ENCODE measurements at regions of chr12 and their contacts with region 1.

Region 1: DNA sequence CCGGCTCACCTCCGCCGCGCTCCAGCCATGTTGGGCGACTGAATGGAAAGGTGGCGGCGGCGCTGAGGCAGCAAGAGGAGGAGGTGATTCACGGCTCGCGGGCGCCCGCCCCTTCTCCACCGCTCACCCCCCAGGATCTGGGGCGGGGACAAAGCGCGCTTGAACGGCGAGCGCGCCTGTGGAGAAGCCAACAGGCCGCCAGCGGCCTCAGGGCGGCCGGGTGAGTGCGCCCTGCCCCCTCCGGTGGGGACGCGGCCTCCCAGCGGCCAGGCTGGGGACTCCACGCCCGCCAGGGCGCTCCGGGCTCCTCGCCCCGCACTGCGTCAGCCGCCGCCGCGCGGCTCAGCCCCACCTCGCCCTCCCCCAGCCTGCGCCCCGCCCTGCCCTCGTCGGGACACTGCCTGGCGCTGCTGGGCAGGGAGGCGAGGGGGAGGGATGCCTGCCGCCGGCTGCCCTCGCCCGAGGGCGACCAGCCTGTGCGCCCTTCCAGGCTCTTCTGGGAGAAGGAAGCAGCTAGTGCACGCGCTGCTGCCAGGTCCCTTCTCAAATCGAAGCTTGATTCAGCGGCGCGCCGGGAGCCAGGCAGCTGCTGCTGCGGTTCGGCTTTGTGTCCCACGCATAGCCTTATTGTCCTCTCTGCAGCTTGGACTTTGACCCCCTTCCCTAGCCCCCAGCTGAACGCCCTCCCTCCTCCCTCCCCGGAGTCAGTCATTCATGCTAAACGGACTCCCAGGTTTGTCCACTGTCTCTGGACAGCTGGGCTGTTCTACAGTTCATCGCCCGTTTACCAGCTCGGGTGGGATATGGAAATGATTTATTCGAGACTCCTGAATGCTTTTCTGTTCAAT is at the start of gene KIF21A:
- DNase-seq: peak; percentile 66
- ATAC-seq: peak; percentile 93
- H3K4me3 ChIP-seq: peak within 1 kb of the TSS; percentile 99
- H3K27ac ChIP-seq: peak within 1 kb of the TSS; percentile 51
- H3K4me1 ChIP-seq: no peaks in the 10 kb centered on the region; the same call in 1 of the 2 replicates
- H3K27me3 ChIP-seq: no peaks in the 10 kb centered on the region
- CTCF ChIP-seq: peak; percentile 48 to 68 (median 57); a peak in 5 of 6 replicates
- EP300 ChIP-seq: peak in 1 of 2 experiments; percentile 8; a peak in 1 of 4 replicates
- POLR2A ChIP-seq: peak; percentile 99
- RAD21 ChIP-seq: peak; percentile 50; the same call in 1 of the 2 replicates
- polyA plus RNA-seq, gene KIF21A: 21.3 to 24.6 TPM

Region 2: GRCh38 chr12:38689704-38690103 is 753.6 kb before region 1 on chr12:
- CTCF ChIA-PET with region 1: no interaction called
- POLR2A ChIA-PET with region 1: no interaction called
- RAD21 ChIA-PET with region 1: no interaction called
- SMC1A ChIA-PET with region 1: no interaction called
- in situ Hi-C with region 1: loop called (anchors 25 kb)
- intact Hi-C with region 1: no loop called
- DNase-seq: no peak
- ATAC-seq: no peak
- H3K4me3 ChIP-seq: no peak overlapping the region
- H3K27ac ChIP-seq: no peak overlapping the region
- H3K4me1 ChIP-seq: no peaks in the 10 kb centered on the region
- H3K27me3 ChIP-seq: no peaks in the 10 kb centered on the region
- CTCF ChIP-seq: no peak
- EP300 ChIP-seq: no peak
- POLR2A ChIP-seq: no peak
- RAD21 ChIP-seq: no peak

Region 3: GRCh38 chr12:38983117-38983902 is 460.0 kb before region 1 on chr12:
- CTCF ChIA-PET with region 1: no interaction called
- POLR2A ChIA-PET with region 1: no interaction called
- RAD21 ChIA-PET with region 1: no interaction called
- SMC1A ChIA-PET with region 1: no interaction called
- in situ Hi-C with region 1: no loop called
- intact Hi-C with region 1: no loop called
- DNase-seq: no peak
- ATAC-seq: no peak; the same call in 2 of the 3 replicates
- H3K4me3 ChIP-seq: no peak overlapping the region
- H3K27ac ChIP-seq: no peak overlapping the region
- H3K4me1 ChIP-seq: no peaks in the 10 kb centered on the region
- H3K27me3 ChIP-seq: no peaks in the 10 kb centered on the region
- CTCF ChIP-seq: no peak
- EP300 ChIP-seq: no peak
- POLR2A ChIP-seq: no peak
- RAD21 ChIP-seq: no peak

Region 4: GRCh38 chr12:39319187-39319586 is 124.1 kb before region 1 on chr12:
- CTCF ChIA-PET with region 1: interaction called, 6 read pairs
- POLR2A ChIA-PET with region 1: no interaction called
- RAD21 ChIA-PET with region 1: interaction called, 6 read pairs
- SMC1A ChIA-PET with region 1: interaction called, 3 read pairs
- in situ Hi-C with region 1: no loop called
- intact Hi-C with region 1: loop called (anchors 2 kb)
- DNase-seq: no peak
- ATAC-seq: no peak
- H3K4me3 ChIP-seq: no peak overlapping the region
- H3K27ac ChIP-seq: no peak overlapping the region
- H3K4me1 ChIP-seq: no peaks in the 10 kb centered on the region
- H3K27me3 ChIP-seq: no peaks in the 10 kb centered on the region
- CTCF ChIP-seq: no peak
- EP300 ChIP-seq: no peak
- POLR2A ChIP-seq: no peak
- RAD21 ChIP-seq: no peak

Region 5: DNA sequence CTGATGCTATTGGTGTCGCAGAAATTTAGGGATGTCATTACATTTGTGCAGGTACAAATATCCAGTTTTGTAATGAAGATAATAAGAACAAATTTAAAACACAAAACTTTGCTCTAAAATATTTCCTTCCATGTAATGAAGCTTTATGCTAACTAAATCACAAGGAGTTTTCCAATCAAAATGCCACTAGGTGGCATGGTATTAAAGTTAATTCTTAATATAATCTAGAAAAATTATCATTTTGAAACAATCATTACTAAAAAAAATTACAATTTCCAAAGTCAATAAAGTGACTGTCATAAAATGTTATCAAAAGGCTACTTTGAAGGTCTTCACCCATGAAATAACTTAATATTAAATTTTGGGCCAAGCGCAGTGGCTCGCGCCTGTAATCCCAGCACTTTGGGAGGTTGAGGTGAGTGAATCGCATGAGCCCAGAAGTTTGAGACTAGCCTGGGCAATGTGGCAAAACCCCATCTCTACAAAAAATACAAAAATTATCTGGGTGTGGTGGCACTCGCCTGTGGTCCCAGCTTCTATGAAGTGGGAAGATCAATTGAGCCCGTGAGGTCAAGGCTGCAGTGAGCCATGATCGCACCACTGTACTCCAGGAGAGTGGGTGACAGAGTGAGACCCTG is 77.8 kb before region 1 on chr12:
- CTCF ChIA-PET with region 1: interaction called, 5 read pairs
- POLR2A ChIA-PET with region 1: no interaction called
- RAD21 ChIA-PET with region 1: interaction called, 11 read pairs
- SMC1A ChIA-PET with region 1: interaction called, 11 read pairs
- in situ Hi-C with region 1: no loop called
- intact Hi-C with region 1: no loop called
- DNase-seq: no peak
- ATAC-seq: no peak
- H3K4me3 ChIP-seq: no peak overlapping the region
- H3K27ac ChIP-seq: no peak overlapping the region
- H3K4me1 ChIP-seq: peaks cover 7% of the 10 kb centered on the region; the same call in 1 of the 2 replicates
- H3K27me3 ChIP-seq: no peaks in the 10 kb centered on the region
- CTCF ChIP-seq: no peak; a peak in 1 of 6 replicates
- EP300 ChIP-seq: no peak
- POLR2A ChIP-seq: no peak
- RAD21 ChIP-seq: no peak

Region 6: GRCh38 chr12:39402922-39403321 is 40.4 kb before region 1 on chr12:
- CTCF ChIA-PET with region 1: interaction called, 4 read pairs
- POLR2A ChIA-PET with region 1: interaction called, 5 read pairs
- RAD21 ChIA-PET with region 1: interaction called, 9 read pairs
- SMC1A ChIA-PET with region 1: interaction called, 33 read pairs
- in situ Hi-C with region 1: no loop called
- intact Hi-C with region 1: no loop called
- DNase-seq: peak; percentile 32
- ATAC-seq: peak; percentile 78
- H3K4me3 ChIP-seq: no peak overlapping the region
- H3K27ac ChIP-seq: no peak overlapping the region
- H3K4me1 ChIP-seq: peaks cover 6% of the 10 kb centered on the region
- H3K27me3 ChIP-seq: no peaks in the 10 kb centered on the region
- CTCF ChIP-seq: no peak
- EP300 ChIP-seq: no peak
- POLR2A ChIP-seq: no peak
- RAD21 ChIP-seq: no peak

Region 7: DNA sequence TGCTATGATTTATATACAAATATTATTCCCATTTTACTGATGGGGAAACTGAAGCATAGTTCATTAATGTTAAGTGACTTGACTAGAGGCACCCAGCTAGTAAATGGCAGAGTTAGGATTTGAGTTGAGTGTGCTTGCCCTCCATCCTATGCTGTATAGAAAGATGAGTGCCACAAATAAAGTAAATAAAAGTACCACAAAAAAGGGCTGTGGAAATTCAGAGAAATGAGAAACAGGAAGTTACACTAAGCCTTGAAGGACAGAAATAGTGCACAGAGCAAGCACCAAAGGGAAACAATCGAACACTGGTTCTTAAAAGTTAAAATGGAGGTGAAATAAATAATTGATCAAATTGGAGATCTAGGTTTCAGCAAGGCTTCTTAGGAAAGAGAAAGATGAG is 185.5 kb after region 1 on chr12:
- CTCF ChIA-PET with region 1: no interaction called
- POLR2A ChIA-PET with region 1: no interaction called
- RAD21 ChIA-PET with region 1: no interaction called
- SMC1A ChIA-PET with region 1: no interaction called
- in situ Hi-C with region 1: no loop called
- intact Hi-C with region 1: no loop called
- DNase-seq: no peak
- ATAC-seq: peak; percentile 67
- H3K4me3 ChIP-seq: no peak overlapping the region
- H3K27ac ChIP-seq: no peak overlapping the region
- H3K4me1 ChIP-seq: peaks cover 10% of the 10 kb centered on the region
- H3K27me3 ChIP-seq: no peaks in the 10 kb centered on the region
- CTCF ChIP-seq: no peak
- EP300 ChIP-seq: no peak
- POLR2A ChIP-seq: no peak
- RAD21 ChIP-seq: no peak